Heart right ventricle (tissue), 16 donors: ENCODE measurements at regions of chr15 and their contacts with region 1.

Region 1: DNA sequence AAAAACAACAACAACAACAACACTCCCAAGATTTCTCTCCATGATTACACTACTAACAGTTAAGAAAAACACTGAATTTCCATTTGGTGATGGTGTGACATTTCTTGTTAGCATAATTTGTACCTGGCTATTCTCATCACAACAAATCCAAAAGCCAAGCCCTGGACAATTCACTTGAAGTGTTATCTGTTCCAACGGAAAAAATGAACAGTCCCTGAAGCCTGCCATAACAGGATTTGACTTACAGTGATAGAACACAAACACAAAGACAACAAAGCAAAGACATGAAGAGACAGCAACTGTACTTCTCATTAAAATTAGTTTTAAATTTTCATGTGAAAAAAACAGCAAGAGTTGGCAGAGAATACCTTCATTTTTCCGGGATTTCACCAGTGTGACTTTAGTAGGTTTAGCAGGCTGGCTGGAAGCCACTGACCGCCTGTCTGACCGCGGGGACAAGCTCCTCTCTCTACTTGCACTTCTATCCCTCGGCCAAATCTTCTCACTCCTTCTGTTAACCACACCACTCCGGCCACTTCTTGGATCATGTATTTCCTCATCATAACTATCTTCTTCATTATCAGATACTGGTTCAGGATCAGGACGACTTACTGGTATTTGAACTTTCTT is 56.3 kb downstream of the TJP1 start:
- DNase-seq: peak; percentile 19 to 30
- ATAC-seq: peak in 6 of 8 donors; percentile 46 to 71 (median 61)
- H3K4me3 ChIP-seq: no peak overlapping the region
- H3K27ac ChIP-seq: peak overlapping the region in 6 of 10 donors; percentile 5 to 45 (median 21)
- H3K4me1 ChIP-seq: peaks cover 6 to 44% (median 30%) of the 10 kb centered on the region in 9 donors
- H3K27me3 ChIP-seq: no peaks in the 10 kb centered on the region
- CTCF ChIP-seq: no peak

Region 2: DNA sequence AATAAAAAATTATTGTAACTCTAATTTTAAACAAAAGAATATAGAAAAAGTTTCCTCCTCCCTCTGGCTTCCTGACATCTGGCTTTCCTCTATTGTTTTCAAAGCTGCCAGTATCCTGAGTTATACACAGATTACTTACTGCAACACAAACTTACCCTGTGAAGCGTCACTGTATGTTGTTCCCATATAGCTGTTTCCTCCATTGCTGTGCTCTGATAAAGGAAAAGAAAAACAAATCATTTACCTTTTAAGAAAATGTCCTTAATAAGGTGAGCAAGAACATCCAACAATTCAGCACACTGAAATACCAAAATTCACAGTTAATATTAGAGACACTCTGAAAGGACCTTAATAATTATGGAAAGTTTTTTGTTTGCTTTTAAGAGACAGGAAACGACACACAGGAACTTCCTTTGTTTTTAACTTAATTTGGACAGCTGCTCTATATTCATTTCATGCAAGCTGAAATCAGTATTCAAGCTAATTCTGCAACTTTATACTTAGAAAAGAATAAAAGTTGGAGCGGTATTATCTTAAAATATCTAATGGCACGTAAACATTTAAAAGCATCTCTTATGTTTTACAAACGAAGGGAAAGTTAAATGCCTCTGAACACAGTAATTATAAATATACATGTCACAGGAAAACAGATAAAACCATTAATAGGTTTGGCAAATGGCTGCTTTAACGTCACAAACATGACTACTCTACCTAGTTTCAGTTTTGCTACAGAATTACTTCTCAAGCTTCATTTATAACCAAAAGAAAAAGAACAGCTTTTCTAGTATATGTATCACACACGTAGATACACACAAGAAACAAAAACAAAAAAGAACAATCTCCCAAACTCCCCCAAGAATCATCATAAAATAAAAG is 34.7 kb after region 1 on chr15:
- intact Hi-C with region 1: loop called in 1 of 10 experiments (anchors 5 kb)
- DNase-seq: no peak
- ATAC-seq: peak in 6 of 8 donors; percentile 41 to 76 (median 65)
- H3K4me3 ChIP-seq: peak overlapping the region in 7 of 10 donors; percentile 11 to 44 (median 31)
- H3K27ac ChIP-seq: peak overlapping the region in 9 of 10 donors; percentile 26 to 78 (median 68)
- H3K4me1 ChIP-seq: peaks cover 9 to 80% (median 64%) of the 10 kb centered on the region in 9 donors
- H3K27me3 ChIP-seq: no peaks in the 10 kb centered on the region
- CTCF ChIP-seq: no peak